ENCODE measurements at regions of chr7 and their contacts with region 1.

Region 1: DNA sequence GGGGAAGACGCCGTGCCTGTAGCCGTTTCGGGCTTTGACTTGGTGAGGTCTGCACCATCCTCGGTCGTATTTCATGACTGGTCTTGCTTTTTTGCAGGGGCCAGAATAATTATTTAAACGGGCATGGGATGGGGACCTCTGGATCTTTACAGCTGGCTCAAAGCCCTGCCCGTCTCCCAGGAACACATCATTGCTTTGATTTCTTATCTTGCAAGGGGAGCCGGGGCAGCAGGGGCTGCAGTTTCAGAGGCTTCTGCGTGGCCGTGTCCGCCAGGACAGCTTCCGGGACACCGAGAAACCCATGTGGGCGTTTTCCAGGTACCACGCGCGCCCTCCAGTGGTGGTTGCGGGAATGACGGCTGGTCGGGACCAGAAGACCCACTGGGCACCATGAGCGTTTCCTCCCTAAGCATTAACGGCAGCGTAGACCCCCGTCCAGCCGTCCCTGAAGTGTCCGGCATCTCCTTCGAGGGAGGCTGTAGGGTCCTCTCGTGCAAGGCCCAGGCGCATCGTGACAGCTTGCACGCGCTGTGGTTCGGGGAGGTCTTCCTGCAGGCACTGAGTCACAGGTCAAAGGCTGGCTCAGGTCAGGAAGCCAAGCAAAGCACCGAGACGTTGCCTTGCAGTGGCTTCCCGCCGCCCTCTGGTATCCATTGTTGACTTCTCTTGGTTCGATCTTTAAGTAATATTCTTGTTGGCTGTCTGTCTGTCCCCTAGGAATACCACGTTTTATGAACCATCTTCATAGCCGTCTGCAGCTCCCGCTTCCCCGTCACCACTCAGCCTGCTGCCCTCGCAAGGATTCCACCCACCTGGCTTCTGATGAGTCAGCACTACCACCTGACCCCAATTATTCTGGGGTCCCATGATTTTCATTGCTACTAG is 16.2 kb upstream of the ZFAND2A start:
- DNase-seq: peak; percentile 84

Region 2: DNA sequence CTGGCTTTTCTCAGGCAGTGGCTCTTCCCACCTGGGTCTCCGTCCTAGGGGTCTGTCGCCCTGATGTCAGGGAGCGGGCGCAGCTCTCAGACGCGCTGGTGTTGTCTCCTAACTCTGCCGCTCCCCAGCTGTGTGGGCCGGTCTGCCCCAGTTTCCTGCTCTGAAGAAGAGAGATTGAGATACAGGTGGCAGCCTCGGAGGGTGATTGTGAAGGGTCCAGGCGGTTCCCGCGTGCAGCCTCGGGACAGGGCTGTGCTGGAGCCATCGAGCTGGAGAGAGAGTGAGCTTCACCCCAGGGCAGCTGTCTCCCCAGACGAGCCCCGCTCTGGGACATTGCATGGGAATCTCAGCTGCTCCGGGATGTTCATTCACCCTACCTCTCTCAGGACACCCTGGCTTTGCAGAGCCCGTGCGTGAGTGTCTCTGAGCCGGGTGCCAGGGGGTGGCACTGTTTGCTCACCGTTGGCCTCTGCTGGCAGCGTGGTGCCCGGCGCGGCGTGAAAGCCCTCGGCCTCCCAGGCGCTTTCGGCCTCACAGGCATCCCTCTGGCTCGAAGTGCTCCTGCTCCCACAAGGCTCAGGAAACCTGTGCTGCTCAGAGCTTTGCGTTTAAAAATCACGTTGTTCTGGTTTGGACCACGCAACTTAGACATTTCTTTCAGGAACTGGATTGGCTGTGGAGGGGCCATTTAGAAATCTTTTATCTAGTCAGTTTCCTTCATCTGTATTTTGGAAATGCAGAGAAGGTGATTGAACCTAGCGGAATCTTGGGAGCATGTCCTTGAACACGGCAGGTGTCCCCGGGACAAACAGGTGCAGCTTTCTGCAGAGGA is 17.6 kb after region 1 on chr7:
- CTCF ChIA-PET with region 1: interaction called, 14 read pairs
- POLR2A ChIA-PET with region 1: no interaction called
- DNase-seq: no peak

Region 3: DNA sequence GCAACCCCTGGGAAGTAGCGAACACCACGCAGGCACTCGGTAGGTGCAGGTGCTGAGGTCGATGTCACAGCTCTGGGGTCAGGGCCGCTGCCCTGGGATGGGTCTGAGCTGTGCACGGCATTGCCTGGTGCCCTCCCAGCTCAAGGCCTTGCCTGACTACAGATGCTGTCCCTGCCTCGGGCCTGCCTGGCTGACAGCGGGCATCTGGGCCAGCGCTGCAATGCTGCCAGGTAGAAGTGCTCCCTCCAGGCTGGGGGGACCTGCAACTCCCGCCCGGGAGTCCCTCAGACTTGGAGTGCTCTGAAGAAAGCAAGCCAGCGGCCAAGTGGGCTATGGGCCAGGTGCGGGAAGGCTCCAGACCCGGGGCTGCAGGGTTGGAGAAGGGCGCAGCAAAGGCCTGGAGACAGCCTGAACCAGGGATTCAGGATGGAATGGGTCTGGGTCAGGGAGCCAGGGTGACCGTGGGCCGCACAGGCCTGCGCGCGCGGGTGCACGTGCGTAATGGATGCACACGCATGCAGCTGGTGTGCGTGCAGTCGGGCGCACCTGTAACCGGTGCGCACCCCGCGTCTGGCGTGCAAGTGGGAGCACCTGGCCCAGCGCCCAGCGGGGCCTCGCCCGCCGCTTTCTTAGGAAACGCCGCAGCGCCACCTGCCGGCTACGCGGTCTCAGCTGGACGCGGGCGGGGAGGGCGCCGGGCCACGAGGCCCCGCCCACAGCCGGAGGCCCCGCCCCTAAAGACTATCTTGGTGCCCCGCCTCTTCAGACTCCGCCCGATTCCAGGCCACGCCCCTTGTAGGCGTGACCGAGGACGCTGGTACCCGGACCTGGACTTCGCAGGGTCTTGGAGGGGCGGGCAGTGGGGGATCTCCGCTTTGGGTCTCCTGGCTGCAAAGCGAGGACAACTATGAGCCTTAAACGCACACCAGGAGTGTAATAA is 236.4 kb after region 1 on chr7:
- CTCF ChIA-PET with region 1: no interaction called
- POLR2A ChIA-PET with region 1: no interaction called
- DNase-seq: peak; percentile 99

Measured in HEK293T (cell line).